Dendritic cell treated with granulocyte-macrophage colony-stimulating factor and Interleukin-4, amounts not matched to agents 40 ng/mL and 50 ng/mL, for 4 days (primary cell): ENCODE measurements at regions of chr14 and their contacts with region 1.

Region 1: DNA sequence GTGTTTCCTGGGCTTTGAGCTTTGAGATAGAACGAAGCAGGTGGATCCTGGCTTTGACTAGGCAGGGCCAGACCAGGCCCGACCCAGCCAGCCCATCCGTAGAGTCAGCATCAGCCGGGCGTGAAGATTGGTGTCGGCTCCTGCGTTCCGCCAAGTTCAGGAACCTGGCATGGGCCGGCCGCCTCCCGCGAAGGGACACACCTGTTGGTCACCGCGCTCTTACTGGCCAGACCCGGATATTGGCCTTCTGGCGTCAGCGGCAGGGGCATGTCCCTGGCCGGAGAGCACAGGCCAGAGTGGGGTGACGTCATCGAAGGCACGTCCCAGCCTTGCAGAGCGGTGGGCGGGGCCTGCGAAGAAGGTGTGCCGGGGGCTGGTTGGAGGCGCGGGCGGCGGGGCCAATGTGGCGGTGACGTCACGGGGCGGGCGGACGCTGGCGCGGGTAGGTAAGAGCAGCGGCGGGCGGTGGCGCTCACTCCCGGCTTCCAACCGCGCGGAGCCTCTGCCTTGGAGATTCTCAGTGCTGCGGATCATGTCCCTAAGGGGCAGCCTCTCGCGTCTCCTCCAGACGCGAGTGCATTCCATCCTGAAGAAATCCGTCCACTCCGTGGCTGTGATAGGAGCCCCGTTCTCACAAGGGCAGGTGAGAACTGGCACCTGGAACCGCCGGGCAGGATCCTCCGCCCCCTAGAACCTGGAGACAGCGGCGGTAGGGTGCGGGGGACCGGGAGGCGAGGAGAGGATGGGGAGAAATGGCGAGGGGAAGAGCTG is at the start of gene ARG2:
- H3K4me3 Mint-ChIP-seq: peak within 1 kb of the TSS; percentile 80
- H3K27ac Mint-ChIP-seq: peak within 1 kb of the TSS; percentile 80
- H3K4me1 Mint-ChIP-seq: peaks cover 30% of the 10 kb centered on the region
- H3K27me3 Mint-ChIP-seq: peaks cover 23% of the 10 kb centered on the region

Region 2: GRCh38 chr14:67583711-67584644 is 35.7 kb before region 1 on chr14:
- intact Hi-C with region 1: loop called (anchors 5 kb)
- H3K4me3 Mint-ChIP-seq: no peak overlapping the region
- H3K27ac Mint-ChIP-seq: no peak overlapping the region
- H3K4me1 Mint-ChIP-seq: peaks cover 36% of the 10 kb centered on the region
- H3K27me3 Mint-ChIP-seq: peaks cover 4% of the 10 kb centered on the region

Region 3: GRCh38 chr14:67666750-67667449 is 47.3 kb after region 1 on chr14:
- intact Hi-C with region 1: loop called (anchors 1 kb)
- H3K4me3 Mint-ChIP-seq: no peak overlapping the region
- H3K27ac Mint-ChIP-seq: peak overlapping the region; percentile 30
- H3K4me1 Mint-ChIP-seq: peaks cover 77% of the 10 kb centered on the region
- H3K27me3 Mint-ChIP-seq: no peaks in the 10 kb centered on the region